ENCODE measurements at regions of chr5 and their contacts with region 1.

Region 1: DNA sequence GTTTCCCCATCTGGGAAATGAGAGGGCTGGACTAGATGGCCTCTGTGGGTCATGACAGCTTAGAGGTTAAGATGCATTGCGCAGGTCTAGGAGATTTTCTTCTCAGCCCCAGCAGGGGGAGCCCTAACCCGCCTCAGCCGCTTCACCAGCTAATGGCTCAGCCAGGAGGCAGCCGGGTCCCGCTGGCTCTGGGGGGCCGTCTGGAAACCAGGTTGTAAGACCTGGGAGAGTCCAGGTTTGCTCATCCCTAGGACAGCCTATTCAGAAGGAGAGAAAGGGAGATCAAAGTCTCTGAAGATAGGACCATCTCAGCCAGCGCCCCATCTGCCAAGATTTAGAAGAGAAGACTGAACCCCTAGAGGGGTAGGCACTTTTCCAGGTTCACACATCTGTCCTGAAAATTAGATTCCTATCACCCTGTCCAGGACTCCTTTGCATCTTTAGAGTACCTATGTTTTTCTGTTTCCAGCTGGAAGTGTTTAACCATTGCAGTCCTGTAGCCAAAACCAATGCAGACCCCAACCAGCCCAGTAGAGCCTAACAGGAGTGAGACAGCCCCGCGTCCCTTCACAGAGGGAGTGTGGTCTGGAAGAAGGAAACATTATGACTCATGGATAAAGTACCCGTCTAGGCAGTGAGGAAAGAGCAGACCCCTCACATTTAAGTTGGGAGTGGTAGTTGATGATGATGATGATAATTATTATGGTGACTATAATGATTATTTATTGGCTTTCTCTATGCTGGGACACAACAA is 27.5 kb downstream of the SPARC start:
- DNase-seq: no peak
- H3K4me3 ChIP-seq: no peak overlapping the region
- H3K27ac ChIP-seq: peak overlapping the region; percentile 74
- H3K27me3 ChIP-seq: no peaks in the 10 kb centered on the region
- CTCF ChIP-seq: peak; percentile 92

Region 2: GRCh38 chr5:151675611-151676313 is 16.6 kb after region 1 on chr5:
- CTCF ChIA-PET with region 1: interaction called, 30 read pairs
- POLR2A ChIA-PET with region 1: interaction called, 39 read pairs
- DNase-seq: no peak
- H3K4me3 ChIP-seq: peak overlapping the region; percentile 39
- H3K27ac ChIP-seq: peak overlapping the region; percentile 90
- H3K27me3 ChIP-seq: no peaks in the 10 kb centered on the region
- CTCF ChIP-seq: peak; percentile 14; the same call in 1 of the 2 replicates

Region 3: GRCh38 chr5:151699071-151699901 is 40.1 kb after region 1 on chr5:
- CTCF ChIA-PET with region 1: interaction called, 8 read pairs
- POLR2A ChIA-PET with region 1: interaction called, 11 read pairs
- DNase-seq: peak; percentile 97
- H3K4me3 ChIP-seq: no peak overlapping the region
- H3K27ac ChIP-seq: peak overlapping the region; percentile 100
- H3K27me3 ChIP-seq: no peaks in the 10 kb centered on the region
- CTCF ChIP-seq: no peak

Region 4: GRCh38 chr5:151719228-151720000 is 60.2 kb after region 1 on chr5:
- CTCF ChIA-PET with region 1: interaction called, 37 read pairs
- POLR2A ChIA-PET with region 1: no interaction called
- DNase-seq: no peak
- H3K4me3 ChIP-seq: no peak overlapping the region
- H3K27ac ChIP-seq: peak overlapping the region; percentile 85
- H3K27me3 ChIP-seq: no peaks in the 10 kb centered on the region
- CTCF ChIP-seq: peak; percentile 48

Region 5: GRCh38 chr5:151764801-151765200 is 105.6 kb after region 1 on chr5:
- CTCF ChIA-PET with region 1: interaction called, 14 read pairs
- POLR2A ChIA-PET with region 1: no interaction called
- DNase-seq: no peak
- H3K4me3 ChIP-seq: no peak overlapping the region
- H3K27ac ChIP-seq: no peak overlapping the region
- H3K27me3 ChIP-seq: no peaks in the 10 kb centered on the region
- CTCF ChIP-seq: no peak

Region 6: DNA sequence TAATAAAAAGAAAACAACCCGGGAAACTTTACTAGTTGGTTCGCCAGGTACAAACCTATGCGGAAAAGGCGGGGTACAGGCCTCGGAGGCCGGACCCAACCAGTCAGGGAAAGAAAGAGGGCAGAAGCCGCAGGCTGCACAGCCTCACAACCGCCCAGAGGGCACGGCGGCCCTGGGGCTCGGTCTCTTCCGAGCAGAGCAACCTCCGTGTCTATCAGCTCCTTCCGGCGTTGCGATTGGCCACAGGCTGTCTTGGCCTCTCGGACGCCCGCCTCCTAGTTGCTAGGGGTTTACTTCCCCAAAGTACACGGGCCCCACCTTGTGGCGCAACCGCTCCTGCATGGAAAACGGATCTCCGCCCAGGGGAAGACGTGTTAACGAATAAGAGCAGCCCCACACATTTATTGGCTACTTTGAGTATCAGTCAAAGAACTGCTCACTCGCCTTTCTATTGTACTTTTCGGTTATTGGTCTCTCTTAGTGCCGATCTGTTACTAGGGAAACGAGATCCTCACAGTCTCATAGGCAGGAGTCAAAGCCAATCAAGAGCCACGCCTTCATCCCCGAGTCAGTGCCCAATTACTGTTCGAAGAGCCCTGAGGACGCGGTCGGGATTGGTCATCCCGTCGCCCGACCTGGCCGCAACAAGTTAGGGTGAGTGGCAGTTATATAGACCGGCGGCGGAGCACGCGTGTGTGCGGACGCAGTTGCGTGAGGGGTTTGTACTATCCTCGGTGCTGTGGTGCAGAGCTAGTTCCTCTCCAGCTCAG is 112.3 kb after region 1 on chr5 and contains the start of gene G3BP1:
- CTCF ChIA-PET with region 1: interaction called, 19 read pairs
- POLR2A ChIA-PET with region 1: interaction called, 16 read pairs
- DNase-seq: peak; percentile 100
- H3K4me3 ChIP-seq: peak within 1 kb of the TSS; percentile 91
- H3K27ac ChIP-seq: peak within 1 kb of the TSS; percentile 95
- H3K27me3 ChIP-seq: no peaks in the 10 kb centered on the region
- CTCF ChIP-seq: peak; percentile 68
- polyA plus RNA-seq, gene G3BP1: 87.7 and 101 TPM in 2 replicates

Region 7: GRCh38 chr5:152593407-152593932 is 934.3 kb after region 1 on chr5:
- CTCF ChIA-PET with region 1: no interaction called
- POLR2A ChIA-PET with region 1: no interaction called
- DNase-seq: no peak
- H3K4me3 ChIP-seq: no peak overlapping the region
- H3K27ac ChIP-seq: no peak overlapping the region
- H3K27me3 ChIP-seq: no peaks in the 10 kb centered on the region
- CTCF ChIP-seq: no peak